ENCODE measurements at regions of chr16 and their contacts with region 1.

Region 1: GRCh38 chr16:89623511-89624261 is 10.2 kb downstream of the DPEP1 start:
- DNase-seq: no peak
- H3K4me3 ChIP-seq: no peak overlapping the region
- H3K27ac ChIP-seq: peak overlapping the region in 1 of 4 donors; percentile 54
- H3K4me1 ChIP-seq: peaks cover 0 to 16% (median 5%) of the 10 kb centered on the region in 3 donors
- H3K27me3 ChIP-seq: peaks cover 0 to 71% (median 0%) of the 10 kb centered on the region in 4 donors
- CTCF ChIP-seq: no peak
- POLR2A ChIP-seq: no peak

Region 2: DNA sequence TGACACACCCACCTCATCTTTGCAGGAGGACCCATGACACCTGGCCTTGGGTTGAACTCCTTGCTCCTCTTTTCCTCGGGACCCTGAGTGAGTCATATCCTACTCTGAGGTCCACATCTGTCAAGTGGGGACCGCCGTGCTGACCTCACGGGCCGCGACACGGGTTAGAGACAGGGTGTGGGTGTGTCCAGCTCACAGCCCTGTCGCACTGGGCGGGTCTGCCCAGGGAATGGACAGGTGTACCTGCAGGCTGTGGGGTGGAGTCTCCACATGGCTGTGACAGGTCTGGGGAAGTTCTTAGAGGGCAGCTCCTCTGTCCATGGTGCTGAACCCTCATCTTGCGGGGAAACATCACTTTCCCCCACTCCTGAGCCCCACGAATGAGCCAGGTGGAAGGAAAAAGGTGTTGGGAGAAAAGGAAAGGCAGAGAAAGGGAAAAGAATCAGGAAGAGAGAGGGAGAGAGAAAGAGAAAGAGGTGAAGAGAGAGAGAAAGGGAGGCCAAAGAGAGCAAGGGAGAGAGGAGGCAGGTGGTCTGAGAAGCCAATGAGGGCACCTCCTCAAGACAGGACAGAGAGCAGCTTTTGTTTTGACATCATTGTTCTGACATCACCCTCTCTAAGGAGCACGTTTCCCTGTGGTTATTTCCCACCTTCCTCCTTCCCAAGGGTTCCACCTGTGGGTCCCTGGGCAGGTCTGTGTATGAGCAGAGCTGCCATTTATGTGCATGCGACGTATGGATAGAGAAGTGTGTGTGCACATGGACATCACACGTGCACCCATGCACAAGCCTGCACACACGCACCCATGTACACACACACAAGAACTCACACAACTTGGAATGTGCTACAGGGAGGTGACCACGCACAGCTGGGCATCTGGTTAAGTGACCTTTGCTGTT is 614.1 kb before region 1 on chr16:
- intact Hi-C with region 1: loop called (anchors 10 kb)
- DNase-seq: no peak
- H3K4me3 ChIP-seq: no peak overlapping the region
- H3K27ac ChIP-seq: no peak overlapping the region
- H3K4me1 ChIP-seq: no peaks in the 10 kb centered on the region
- H3K27me3 ChIP-seq: peaks cover 0 to 79% (median 1%) of the 10 kb centered on the region in 4 donors
- CTCF ChIP-seq: no peak
- POLR2A ChIP-seq: no peak

Region 3: DNA sequence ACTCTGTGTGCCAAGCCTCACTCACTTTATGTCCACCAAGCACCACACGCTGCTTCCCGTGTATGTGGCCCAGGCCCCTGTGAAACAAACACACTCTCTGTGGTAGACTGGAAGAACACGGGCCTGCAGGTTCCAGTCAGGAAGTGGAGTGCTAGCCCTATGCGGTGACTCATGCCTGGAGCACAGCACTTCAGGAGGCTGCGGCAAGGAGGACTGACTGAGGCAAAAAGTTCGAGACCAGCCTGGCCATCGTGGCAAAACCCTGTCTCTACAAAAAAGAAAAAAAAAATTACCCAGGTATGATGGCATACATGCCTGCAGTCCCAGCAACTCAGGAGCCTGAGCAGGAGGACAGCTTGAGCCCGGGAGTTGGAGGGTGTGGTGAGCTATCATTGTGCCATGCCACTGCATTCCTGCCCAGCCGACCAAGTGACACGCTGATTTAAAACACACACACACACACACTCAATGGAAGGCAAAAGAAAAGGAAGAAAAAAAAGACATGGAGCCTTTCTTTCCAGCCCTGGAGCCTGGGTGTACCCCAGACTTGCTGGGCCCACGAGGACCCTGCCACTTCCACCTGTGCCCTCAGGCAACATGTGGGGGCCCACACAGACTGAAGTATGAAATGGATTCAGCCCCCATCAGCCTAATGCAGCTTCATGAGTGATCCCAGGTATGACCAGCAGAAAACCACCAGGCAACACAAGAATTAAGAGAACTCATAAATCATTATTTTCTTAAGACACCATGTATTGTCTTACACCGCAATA is 259.9 kb before region 1 on chr16:
- intact Hi-C with region 1: no loop called
- DNase-seq: no peak
- H3K4me3 ChIP-seq: peak overlapping the region in 3 of 4 donors; percentile 11 to 29 (median 17)
- H3K27ac ChIP-seq: peak overlapping the region in 3 of 4 donors; percentile 50 to 81 (median 59)
- H3K4me1 ChIP-seq: peaks cover 61 to 99% (median 78%) of the 10 kb centered on the region in 3 donors
- H3K27me3 ChIP-seq: no peaks in the 10 kb centered on the region
- CTCF ChIP-seq: no peak
- POLR2A ChIP-seq: no peak

Region 4: DNA sequence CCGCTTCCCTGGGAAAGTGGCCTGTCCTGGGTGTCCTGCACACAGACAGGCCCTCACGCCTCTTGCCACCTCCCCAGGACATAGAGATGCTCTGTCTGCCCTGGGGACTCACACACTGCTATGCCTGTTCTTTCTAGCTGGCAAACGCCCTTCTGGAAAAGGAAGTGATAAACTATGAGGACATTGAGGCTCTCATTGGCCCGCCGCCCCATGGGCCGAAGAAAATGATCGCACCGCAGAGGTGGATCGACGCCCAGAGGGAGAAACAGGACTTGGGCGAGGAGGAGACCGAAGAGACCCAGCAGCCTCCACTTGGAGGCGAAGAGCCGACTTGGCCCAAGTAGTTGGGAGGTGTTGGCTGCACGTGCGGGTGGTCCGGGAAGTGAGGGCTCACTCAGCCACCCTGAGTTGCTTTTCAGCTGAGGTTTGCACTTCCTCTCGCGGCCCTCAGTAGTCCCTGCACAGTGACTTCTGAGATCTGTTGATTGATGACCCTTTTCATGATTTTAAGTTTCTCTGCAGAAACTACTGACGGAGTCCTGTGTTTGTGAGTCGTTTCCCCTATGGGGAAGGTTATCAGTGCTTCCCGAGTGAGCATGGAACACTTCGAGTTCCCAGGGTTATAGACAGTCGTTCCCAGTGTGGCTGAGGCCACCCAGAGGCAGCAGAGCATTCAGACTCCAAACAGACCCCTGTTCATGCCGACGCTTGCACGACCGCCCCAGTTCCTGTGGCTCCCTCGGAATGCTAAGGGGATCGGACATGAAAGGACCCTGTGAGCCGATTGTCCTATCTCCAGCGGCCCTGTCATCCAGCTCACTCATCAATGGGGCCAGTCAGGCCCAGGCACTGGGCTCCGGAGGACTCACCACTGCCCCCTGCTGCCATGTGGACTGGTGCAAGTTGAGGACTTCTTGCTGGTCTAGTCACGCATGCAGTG is 66.7 kb before region 1 on chr16:
- intact Hi-C with region 1: no loop called
- DNase-seq: no peak
- H3K4me3 ChIP-seq: no peak overlapping the region
- H3K27ac ChIP-seq: no peak overlapping the region
- H3K4me1 ChIP-seq: peaks cover 16 to 38% (median 17%) of the 10 kb centered on the region in 3 donors
- H3K27me3 ChIP-seq: no peaks in the 10 kb centered on the region
- CTCF ChIP-seq: peak; percentile 42 to 81 (median 70)
- POLR2A ChIP-seq: no peak

Measured in esophagus squamous epithelium (tissue), 5 donors.